CD4-positive, alpha-beta T cell (primary cell): ENCODE measurements at regions of chr10 and their contacts with region 1.

Region 1: DNA sequence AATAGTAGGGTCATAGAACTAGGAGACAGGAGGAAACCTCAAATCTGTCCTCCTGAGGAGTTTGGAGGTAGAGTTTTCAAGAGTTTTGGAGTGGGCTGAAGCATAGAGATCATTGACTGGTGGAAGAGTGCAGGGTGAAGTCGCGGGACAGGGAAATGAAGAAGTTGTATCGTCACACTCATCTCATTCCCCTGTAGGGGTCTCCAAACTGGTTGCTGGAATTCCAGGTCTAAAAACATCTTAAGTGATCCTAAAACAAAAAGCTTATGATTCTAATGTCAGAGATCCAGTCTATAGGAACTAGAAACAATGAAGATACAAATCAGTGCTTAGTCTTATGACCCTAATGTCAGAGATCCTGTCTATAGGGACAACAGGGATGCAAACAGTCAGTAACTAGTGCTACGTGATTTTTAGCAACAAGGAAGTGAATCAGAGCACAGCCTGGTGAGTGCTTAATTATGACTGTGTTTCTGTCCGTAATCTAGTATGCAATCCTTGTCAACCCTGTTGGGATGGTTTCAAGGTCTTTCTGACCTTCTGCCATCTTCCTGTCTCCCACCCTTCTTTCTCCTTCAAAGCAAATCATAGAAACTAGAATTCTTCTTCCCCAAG is 139.4 kb downstream of the SKIDA1 start:
- DNase-seq: no peak
- ATAC-seq: no peak
- H3K4me3 ChIP-seq: no peak overlapping the region
- H3K4me3 Mint-ChIP-seq: no peak overlapping the region
- H3K27ac ChIP-seq: no peak overlapping the region
- H3K27ac Mint-ChIP-seq: no peak overlapping the region
- H3K4me1 ChIP-seq: no peaks in the 10 kb centered on the region
- H3K4me1 Mint-ChIP-seq: no peaks in the 10 kb centered on the region
- H3K27me3 ChIP-seq: no peaks in the 10 kb centered on the region
- H3K27me3 Mint-ChIP-seq: no peaks in the 10 kb centered on the region
- CTCF ChIP-seq: no peak

Region 2: GRCh38 chr10:21299330-21300090 is 86.6 kb before region 1 on chr10:
- CTCF ChIA-PET with region 1: no interaction called
- POLR2A ChIA-PET with region 1: no interaction called
- intact Hi-C with region 1: loop called in 1 of 2 experiments (anchors 1 kb)
- DNase-seq: no peak
- ATAC-seq: no peak
- H3K4me3 ChIP-seq: no peak overlapping the region
- H3K4me3 Mint-ChIP-seq: no peak overlapping the region
- H3K27ac ChIP-seq: no peak overlapping the region
- H3K27ac Mint-ChIP-seq: no peak overlapping the region
- H3K4me1 ChIP-seq: no peaks in the 10 kb centered on the region
- H3K4me1 Mint-ChIP-seq: no peaks in the 10 kb centered on the region
- H3K27me3 ChIP-seq: peaks cover 2 to 6% of the 10 kb centered on the region in 2 experiments
- H3K27me3 Mint-ChIP-seq: peaks cover 3% of the 10 kb centered on the region
- CTCF ChIP-seq: no peak